ENCODE measurements at regions of chr6 and their contacts with region 1.

Region 1: DNA sequence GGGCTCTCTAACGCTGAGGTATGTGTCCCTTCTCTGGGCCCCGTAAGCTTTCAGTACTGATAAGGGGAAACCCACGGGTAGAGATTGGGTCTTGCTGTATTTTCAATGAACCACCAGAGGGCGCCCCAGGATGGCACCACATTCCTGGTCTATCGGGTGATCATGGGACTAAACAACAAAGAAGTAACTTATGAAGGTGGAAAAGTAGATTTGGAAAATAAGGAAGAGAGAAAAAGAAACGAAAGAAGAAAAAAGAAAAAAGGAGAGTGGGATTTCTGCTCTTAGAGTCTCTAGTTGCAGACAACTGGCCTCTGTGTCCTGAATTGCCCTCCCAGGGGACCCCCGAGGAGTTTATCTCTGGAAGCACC is 93.8 kb downstream of the GMPR start:
- DNase-seq: peak; percentile 74
- H3K4me3 Mint-ChIP-seq: no peak overlapping the region
- H3K27ac Mint-ChIP-seq: no peak overlapping the region
- H3K4me1 Mint-ChIP-seq: peaks cover 18% of the 10 kb centered on the region
- H3K27me3 Mint-ChIP-seq: no peaks in the 10 kb centered on the region

Region 2: DNA sequence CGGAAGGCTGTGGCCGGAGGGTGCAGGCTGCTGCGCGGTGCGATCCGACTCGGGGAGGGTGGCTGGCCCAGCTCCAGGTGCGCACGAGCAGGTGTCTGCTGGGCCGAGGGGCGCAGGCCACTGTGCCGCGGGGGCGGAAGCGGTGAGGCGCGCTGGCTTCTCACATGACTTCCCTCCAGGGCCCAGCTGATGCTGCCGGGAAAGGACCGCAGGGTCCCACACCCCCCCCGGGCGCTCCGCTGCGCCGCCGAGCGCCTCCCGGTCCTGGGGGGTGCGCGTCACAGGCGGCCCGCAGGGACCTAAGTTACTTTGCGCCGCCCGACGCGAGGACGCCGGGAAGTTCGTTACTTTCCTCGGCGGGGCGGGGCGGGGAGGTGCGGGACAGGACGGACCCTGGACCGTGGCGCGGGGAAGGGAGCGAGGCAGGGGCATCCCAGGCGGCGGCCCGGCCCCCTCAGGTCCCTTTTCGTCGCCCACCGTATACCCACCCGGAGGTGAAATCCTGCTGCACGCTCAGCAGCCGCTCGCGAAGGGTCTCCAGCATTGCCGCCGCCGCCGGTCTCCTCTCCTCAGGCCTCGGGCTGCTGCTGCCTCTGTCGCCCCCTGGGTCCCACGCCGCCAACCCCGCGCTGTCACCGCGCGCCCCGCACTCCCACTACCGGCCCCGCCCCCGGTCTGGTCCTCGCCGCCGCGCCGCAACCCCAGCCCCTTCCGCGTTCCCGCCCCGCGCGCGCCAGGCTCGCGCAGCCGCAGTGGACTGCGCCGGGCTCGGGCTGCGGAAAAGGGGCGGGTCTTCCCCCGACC is 669.6 kb before region 1 on chr6 and contains the start of gene DTNBP1:
- intact Hi-C with region 1: no loop called
- DNase-seq: peak; percentile 85
- H3K4me3 Mint-ChIP-seq: peak within 1 kb of the TSS; percentile 81
- H3K27ac Mint-ChIP-seq: peak within 1 kb of the TSS; percentile 77
- H3K4me1 Mint-ChIP-seq: peaks cover 24% of the 10 kb centered on the region
- H3K27me3 Mint-ChIP-seq: peaks cover 14% of the 10 kb centered on the region
- total RNA-seq, gene DTNBP1: 17.2 and 19.2 TPM in 2 replicates

Region 3: GRCh38 chr6:16286148-16286522 is 46.0 kb before region 1 on chr6:
- intact Hi-C with region 1: loop called (anchors 1 kb)
- DNase-seq: peak; percentile 8
- H3K4me3 Mint-ChIP-seq: no peak overlapping the region
- H3K27ac Mint-ChIP-seq: no peak overlapping the region
- H3K4me1 Mint-ChIP-seq: no peaks in the 10 kb centered on the region
- H3K27me3 Mint-ChIP-seq: no peaks in the 10 kb centered on the region

Region 4: DNA sequence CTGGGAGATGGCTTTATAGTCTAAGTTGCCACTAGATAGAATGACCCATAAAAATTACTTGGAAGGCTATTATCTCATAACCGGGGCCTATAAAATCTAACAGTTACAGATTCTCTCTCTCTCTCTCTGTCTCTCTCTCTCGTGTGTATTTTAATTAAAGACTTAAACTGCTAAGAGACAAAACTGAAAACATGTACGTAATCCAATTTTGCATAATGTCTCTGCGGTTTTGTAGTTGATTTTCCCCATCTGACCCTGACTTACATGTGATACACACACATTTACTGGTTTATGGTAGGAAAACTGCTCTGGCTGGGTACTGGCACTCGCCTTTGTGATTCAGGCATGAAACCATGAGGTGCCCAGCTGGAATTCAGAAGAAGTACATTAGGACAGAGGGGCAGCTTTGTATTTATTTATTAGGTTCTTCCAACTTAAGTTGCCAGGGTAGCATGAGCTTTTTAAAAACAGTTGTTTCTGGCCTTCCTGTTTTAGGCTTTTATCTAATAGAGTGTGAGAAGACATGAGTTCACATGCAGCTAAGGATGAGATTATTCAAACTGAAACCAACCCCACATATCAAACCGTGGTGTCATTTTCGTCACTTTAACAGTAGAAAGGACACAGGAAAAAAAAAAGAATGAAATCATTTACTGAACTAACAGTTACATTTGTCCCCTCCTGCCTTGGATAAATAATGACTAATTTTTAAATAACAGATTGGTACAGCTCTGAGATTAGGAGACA is 88.7 kb after region 1 on chr6:
- intact Hi-C with region 1: loop called (anchors 1 kb)
- DNase-seq: peak; percentile 47
- H3K4me3 Mint-ChIP-seq: peak overlapping the region; percentile 73
- H3K27ac Mint-ChIP-seq: peak overlapping the region; percentile 95
- H3K4me1 Mint-ChIP-seq: peaks cover 63% of the 10 kb centered on the region
- H3K27me3 Mint-ChIP-seq: no peaks in the 10 kb centered on the region

Region 5: GRCh38 chr6:16533721-16534136 is 201.6 kb after region 1 on chr6:
- intact Hi-C with region 1: loop called (anchors 1 kb)
- DNase-seq: no peak
- H3K4me3 Mint-ChIP-seq: no peak overlapping the region
- H3K27ac Mint-ChIP-seq: peak overlapping the region; percentile 83
- H3K4me1 Mint-ChIP-seq: peaks cover 45% of the 10 kb centered on the region
- H3K27me3 Mint-ChIP-seq: no peaks in the 10 kb centered on the region

Region 6: GRCh38 chr6:16712931-16713484 is 380.8 kb after region 1 on chr6:
- intact Hi-C with region 1: loop called (anchors 5 kb)
- DNase-seq: no peak
- H3K4me3 Mint-ChIP-seq: peak overlapping the region; percentile 60
- H3K27ac Mint-ChIP-seq: peak overlapping the region; percentile 88
- H3K4me1 Mint-ChIP-seq: peaks cover 65% of the 10 kb centered on the region
- H3K27me3 Mint-ChIP-seq: no peaks in the 10 kb centered on the region

Region 7: DNA sequence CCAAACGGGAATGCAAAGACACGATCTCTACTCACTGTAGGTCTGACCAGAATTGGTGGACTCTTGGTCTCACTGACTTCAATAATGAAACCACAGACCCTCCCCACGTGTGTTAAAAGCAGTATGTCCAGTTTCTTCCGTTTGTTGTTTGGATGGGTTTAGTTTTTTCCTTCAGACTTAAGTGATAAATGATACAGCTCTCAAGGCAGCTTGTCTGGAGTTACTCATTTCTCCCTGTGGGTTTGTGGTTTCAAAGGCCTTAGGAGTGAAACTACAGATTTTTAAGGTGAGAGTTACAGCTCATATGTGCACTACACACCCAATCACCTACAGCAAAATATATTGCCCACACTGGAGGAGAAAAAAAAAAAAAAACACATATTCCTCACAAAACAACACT is 683.0 kb after region 1 on chr6:
- intact Hi-C with region 1: loop called (anchors 5 kb)
- DNase-seq: peak; percentile 14
- H3K4me3 Mint-ChIP-seq: peak overlapping the region; percentile 16
- H3K27ac Mint-ChIP-seq: no peak overlapping the region
- H3K4me1 Mint-ChIP-seq: peaks cover 17% of the 10 kb centered on the region
- H3K27me3 Mint-ChIP-seq: peaks cover 50% of the 10 kb centered on the region

Region 8: DNA sequence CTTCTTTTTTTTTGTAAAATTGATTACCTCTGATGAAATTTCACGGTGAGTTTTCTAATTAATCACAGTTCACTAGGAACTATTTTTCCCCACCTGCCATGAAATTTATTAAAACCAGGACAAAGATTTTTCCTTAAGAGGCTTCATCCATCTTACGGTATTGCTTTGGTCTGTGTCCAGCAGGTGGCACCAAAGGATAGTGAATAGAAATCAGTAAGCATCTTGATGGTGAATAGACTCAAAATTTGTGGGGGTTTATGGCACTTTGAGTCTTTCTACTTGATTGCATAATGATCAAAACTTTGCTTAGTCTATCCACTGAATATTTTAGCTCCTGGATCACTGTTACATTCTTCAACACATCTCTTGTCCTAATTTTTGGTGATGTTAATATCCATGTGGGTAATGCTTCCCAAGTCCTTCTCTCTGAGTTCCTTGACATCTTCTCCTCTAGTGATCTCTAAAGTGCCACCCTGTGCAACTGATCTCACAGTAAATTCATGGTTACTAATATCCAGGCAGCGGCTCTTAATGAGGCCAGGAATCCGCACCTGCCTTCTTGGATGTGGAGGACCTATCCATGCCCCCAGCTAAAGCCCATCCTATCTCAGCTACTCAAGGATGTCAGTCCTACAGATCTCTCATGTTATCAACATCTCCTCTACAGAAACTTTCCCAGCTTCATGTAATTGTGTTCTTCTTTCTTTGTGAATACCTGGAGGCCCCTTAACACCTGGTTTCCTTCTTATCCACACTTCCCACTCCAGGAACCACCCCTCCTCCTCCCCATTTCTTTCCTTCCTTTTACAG is 824.2 kb after region 1 on chr6:
- intact Hi-C with region 1: no loop called
- DNase-seq: peak; percentile 17
- H3K4me3 Mint-ChIP-seq: no peak overlapping the region
- H3K27ac Mint-ChIP-seq: no peak overlapping the region
- H3K4me1 Mint-ChIP-seq: no peaks in the 10 kb centered on the region
- H3K27me3 Mint-ChIP-seq: no peaks in the 10 kb centered on the region